CD4-positive, alpha-beta T cell (primary cell): ENCODE measurements at regions of chr2 and their contacts with region 1.

Region 1: GRCh38 chr2:149679286-149679685 is 91.7 kb upstream of the MMADHC start:
- DNase-seq: no peak
- ATAC-seq: no peak
- H3K4me3 ChIP-seq: no peak overlapping the region
- H3K4me3 Mint-ChIP-seq: no peak overlapping the region
- H3K27ac ChIP-seq: no peak overlapping the region
- H3K27ac Mint-ChIP-seq: no peak overlapping the region
- H3K4me1 ChIP-seq: no peaks in the 10 kb centered on the region
- H3K4me1 Mint-ChIP-seq: no peaks in the 10 kb centered on the region
- H3K27me3 ChIP-seq: no peaks in the 10 kb centered on the region
- H3K27me3 Mint-ChIP-seq: peaks cover 10% of the 10 kb centered on the region
- CTCF ChIP-seq: no peak

Region 2: GRCh38 chr2:151669585-151670081 is 1990.3 kb after region 1 on chr2:
- CTCF ChIA-PET with region 1: no interaction called
- POLR2A ChIA-PET with region 1: no interaction called
- intact Hi-C with region 1: loop called in 1 of 2 experiments (anchors 5 kb)
- DNase-seq: peak in 4 of 14 experiments; percentile 1 to 53 (median 6)
- ATAC-seq: no peak
- H3K4me3 ChIP-seq: no peak overlapping the region
- H3K4me3 Mint-ChIP-seq: no peak overlapping the region
- H3K27ac ChIP-seq: no peak overlapping the region
- H3K27ac Mint-ChIP-seq: no peak overlapping the region
- H3K4me1 ChIP-seq: no peaks in the 10 kb centered on the region
- H3K4me1 Mint-ChIP-seq: no peaks in the 10 kb centered on the region
- H3K27me3 ChIP-seq: no peaks in the 10 kb centered on the region
- H3K27me3 Mint-ChIP-seq: no peaks in the 10 kb centered on the region
- CTCF ChIP-seq: no peak